Activated CD4-positive, alpha-beta T cell treated with anti-CD3 and anti-CD28 coated beads, Interleukin-2, amount 10 ng/mL, durations not matched to agents 7 days and 5 days (primary cell): ENCODE measurements at regions of chr12 and their contacts with region 1.

Region 1: DNA sequence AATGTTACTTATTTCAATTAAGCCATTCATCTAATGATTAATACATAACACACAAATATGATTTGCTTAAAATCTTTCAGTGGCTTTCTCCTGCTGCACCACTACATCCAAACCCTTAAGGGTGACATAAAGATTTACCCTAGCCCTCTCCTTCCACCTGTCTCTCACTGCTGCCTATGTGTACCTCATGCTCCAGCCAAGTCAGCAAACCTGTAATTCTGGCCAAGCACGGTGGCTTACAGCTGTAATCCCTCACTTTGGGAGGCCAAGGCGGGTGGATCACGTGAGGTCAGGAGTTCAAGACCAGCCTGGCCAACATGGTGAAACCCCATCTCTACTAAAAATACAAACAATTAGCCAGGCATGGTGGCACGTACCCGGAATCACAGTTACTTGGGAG is 31.7 kb upstream of the CERS5 start:
- DNase-seq: no peak
- H3K4me3 Mint-ChIP-seq: no peak overlapping the region
- H3K27ac Mint-ChIP-seq: no peak overlapping the region
- H3K4me1 Mint-ChIP-seq: no peaks in the 10 kb centered on the region
- H3K27me3 Mint-ChIP-seq: no peaks in the 10 kb centered on the region

Region 2: GRCh38 chr12:50211392-50212070 is 12.7 kb after region 1 on chr12:
- CTCF ChIA-PET with region 1: interaction called, 10 read pairs
- POLR2A ChIA-PET with region 1: no interaction called
- DNase-seq: no peak
- H3K4me3 Mint-ChIP-seq: peak overlapping the region; percentile 37
- H3K27ac Mint-ChIP-seq: peak overlapping the region; percentile 88
- H3K4me1 Mint-ChIP-seq: peaks cover 33% of the 10 kb centered on the region
- H3K27me3 Mint-ChIP-seq: no peaks in the 10 kb centered on the region

Region 3: DNA sequence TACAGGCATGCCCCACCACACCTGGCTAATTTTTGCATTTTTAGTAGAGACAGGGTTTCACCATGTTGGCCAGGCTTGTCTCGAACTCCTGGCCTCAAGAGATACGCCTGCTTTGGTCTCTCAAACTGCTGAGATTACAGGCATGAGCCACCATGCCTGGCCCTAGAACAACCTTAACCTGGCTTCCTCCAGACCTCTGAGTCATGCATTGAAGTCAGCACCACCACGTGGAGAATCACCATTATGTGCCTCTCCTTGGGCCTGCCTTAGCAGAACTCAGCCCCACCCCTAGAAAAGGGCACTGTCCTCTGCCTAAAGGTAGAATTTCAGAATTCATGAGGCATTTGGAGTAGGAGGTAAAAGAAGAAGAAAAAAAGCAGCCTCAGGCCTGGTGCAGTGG is 35.5 kb after region 1 on chr12:
- CTCF ChIA-PET with region 1: no interaction called
- POLR2A ChIA-PET with region 1: no interaction called
- DNase-seq: no peak
- H3K4me3 Mint-ChIP-seq: no peak overlapping the region
- H3K27ac Mint-ChIP-seq: no peak overlapping the region
- H3K4me1 Mint-ChIP-seq: no peaks in the 10 kb centered on the region
- H3K27me3 Mint-ChIP-seq: no peaks in the 10 kb centered on the region